Sigmoid colon (tissue), 7 donors: ENCODE measurements at regions of chr17 and their contacts with region 1.

Region 1: GRCh38 chr17:51046514-51047384 is 73.9 kb downstream of the SPAG9 start:
- DNase-seq: peak; percentile 91
- H3K4me3 ChIP-seq: peak overlapping the region; percentile 14 to 41 (median 34)
- H3K27ac ChIP-seq: peak overlapping the region; percentile 16 to 73 (median 63)
- H3K4me1 ChIP-seq: peaks cover 0 to 44% (median 15%) of the 10 kb centered on the region in 4 donors
- H3K27me3 ChIP-seq: no peaks in the 10 kb centered on the region
- CTCF ChIP-seq: no peak
- EP300 ChIP-seq: no peak
- POLR2A ChIP-seq: peak in 1 of 2 donors; percentile 12

Region 2: GRCh38 chr17:50853015-50853615 is 193.6 kb before region 1 on chr17:
- intact Hi-C with region 1: loop called (anchors 10 kb)
- DNase-seq: no peak
- H3K4me3 ChIP-seq: no peak overlapping the region
- H3K27ac ChIP-seq: peak overlapping the region; percentile 58 to 71 (median 68)
- H3K4me1 ChIP-seq: peaks cover 0 to 20% (median 12%) of the 10 kb centered on the region in 4 donors
- H3K27me3 ChIP-seq: no peaks in the 10 kb centered on the region
- CTCF ChIP-seq: no peak
- EP300 ChIP-seq: no peak
- POLR2A ChIP-seq: no peak

Region 3: DNA sequence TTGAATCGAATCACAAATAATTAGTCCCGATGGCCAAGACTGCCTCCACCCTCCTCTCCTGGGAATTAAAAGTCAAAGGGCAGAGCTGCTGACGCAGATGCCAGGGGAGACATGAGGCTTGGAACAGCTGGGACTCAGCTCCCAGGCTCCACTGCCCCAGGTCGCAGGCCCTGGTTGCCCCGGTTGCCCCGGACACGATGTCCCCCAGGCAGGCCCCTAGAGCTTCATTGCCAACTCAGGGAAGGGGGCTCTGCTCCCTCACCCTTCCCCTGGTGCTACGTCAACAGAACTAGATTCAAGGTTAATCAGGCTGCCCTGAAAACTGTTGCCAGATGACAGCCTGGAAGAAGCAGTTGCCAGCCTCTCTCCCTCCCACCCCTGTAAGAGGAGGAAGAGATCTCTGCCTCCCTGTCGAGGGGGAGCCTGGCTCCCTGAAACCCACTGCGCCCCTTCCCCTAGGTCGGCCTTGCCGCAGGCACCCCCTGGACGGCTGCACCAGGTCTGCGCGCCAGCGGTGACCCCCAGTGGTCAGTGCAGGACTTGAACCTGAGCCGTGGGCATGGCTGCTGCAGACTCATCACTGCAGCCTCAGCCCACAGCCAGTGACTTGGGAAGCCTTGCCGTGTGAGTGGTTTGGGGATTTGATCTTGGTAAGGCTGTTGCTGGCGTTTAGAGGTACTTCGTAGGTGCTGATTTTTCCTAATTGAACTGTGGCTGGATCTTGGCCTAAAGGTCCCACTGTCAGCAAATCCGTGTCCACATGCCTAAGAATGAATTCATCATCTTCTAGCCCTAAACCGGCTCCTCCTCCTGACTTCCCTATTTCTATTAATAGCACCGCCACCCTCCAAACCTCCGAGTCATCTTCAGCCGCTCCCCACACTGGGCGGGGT is 96.5 kb before region 1 on chr17:
- intact Hi-C with region 1: no loop called
- DNase-seq: peak; percentile 91
- H3K4me3 ChIP-seq: peak overlapping the region in 1 of 4 donors; percentile 14
- H3K27ac ChIP-seq: peak overlapping the region; percentile 82 to 92 (median 84)
- H3K4me1 ChIP-seq: peaks cover 0 to 51% (median 41%) of the 10 kb centered on the region in 4 donors
- H3K27me3 ChIP-seq: no peaks in the 10 kb centered on the region
- CTCF ChIP-seq: peak; percentile 76 to 95 (median 94)
- EP300 ChIP-seq: peak in 2 of 4 donors; percentile 60 to 85
- POLR2A ChIP-seq: peak in 1 of 2 donors; percentile 31

Region 4: GRCh38 chr17:51000835-51001638 is 45.7 kb before region 1 on chr17:
- intact Hi-C with region 1: loop called (anchors 5 kb)
- DNase-seq: no peak
- H3K4me3 ChIP-seq: no peak overlapping the region
- H3K27ac ChIP-seq: no peak overlapping the region
- H3K4me1 ChIP-seq: peaks cover 0 to 4% (median 0%) of the 10 kb centered on the region in 4 donors
- H3K27me3 ChIP-seq: no peaks in the 10 kb centered on the region
- CTCF ChIP-seq: peak; percentile 32 to 56 (median 47)
- EP300 ChIP-seq: no peak
- POLR2A ChIP-seq: no peak